Right ventricle myocardium inferior (tissue), 1 donor: ENCODE measurements at regions of chr11 and their contacts with region 1.

Region 1: GRCh38 chr11:4826425-4826824 is 5.3 kb downstream of the OR51F2 start:
- DNase-seq: no peak
- ATAC-seq: no peak

Region 2: GRCh38 chr11:4181782-4182721 is 644.4 kb before region 1 on chr11:
- intact Hi-C with region 1: loop called (anchors 2 kb)
- DNase-seq: no peak
- ATAC-seq: peak; percentile 66

Region 3: GRCh38 chr11:4636962-4637661 is 189.3 kb before region 1 on chr11 and contains the start of gene OR51D1:
- intact Hi-C with region 1: loop called (anchors 1 kb)
- DNase-seq: peak; percentile 80
- ATAC-seq: peak; percentile 92
- total RNA-seq, gene OR51D1: not detected